A549 (cell line): ENCODE measurements at regions of chr2 and their contacts with region 1.

Region 1: GRCh38 chr2:44981136-44982108 is 27.8 kb downstream of the SIX2 start:
- DNase-seq: peak; percentile 81 to 83
- ATAC-seq: peak; percentile 84 to 97
- H3K4me3 ChIP-seq: no peak overlapping the region
- H3K27ac ChIP-seq: no peak overlapping the region
- H3K4me1 ChIP-seq: no peaks in the 10 kb centered on the region
- CTCF ChIP-seq: peak; percentile 97
- EP300 ChIP-seq: no peak
- POLR2A ChIP-seq: no peak
- RAD21 ChIP-seq: peak; percentile 97 to 99

Region 2: DNA sequence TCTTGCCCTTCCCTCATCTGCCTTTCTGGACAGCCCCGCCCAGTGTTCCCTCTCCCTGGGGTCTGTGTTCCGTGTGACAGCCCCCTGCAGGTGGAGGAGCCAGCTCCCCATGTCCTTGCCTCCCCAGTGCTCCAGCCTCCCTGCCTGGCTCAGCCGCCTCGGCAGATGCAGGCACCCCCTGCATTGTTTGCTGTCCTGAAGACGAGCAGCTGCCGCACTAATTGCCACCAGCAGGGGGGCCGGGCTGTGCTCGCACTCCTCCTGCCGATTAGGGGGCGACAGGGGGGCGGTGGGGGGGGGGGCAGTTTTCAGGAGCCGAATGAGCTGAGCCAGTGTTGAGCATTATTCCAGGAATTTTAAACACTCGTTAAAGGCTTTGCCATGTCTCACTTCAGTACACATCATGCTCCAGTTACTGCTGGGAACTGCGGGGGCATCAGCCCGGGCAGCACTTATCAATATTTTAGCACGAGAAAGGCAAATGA is 16.6 kb before region 1 on chr2:
- CTCF ChIA-PET with region 1: interaction called, 110 read pairs
- POLR2A ChIA-PET with region 1: no interaction called
- DNase-seq: no peak
- ATAC-seq: peak; percentile 26 to 63; a peak in 3 of 6 replicates
- H3K4me3 ChIP-seq: no peak overlapping the region
- H3K27ac ChIP-seq: no peak overlapping the region; a peak in 1 of 6 replicates
- H3K4me1 ChIP-seq: peaks cover 1% of the 10 kb centered on the region; the same call in 2 of the 3 replicates
- CTCF ChIP-seq: no peak
- EP300 ChIP-seq: no peak
- POLR2A ChIP-seq: no peak
- RAD21 ChIP-seq: no peak

Region 3: DNA sequence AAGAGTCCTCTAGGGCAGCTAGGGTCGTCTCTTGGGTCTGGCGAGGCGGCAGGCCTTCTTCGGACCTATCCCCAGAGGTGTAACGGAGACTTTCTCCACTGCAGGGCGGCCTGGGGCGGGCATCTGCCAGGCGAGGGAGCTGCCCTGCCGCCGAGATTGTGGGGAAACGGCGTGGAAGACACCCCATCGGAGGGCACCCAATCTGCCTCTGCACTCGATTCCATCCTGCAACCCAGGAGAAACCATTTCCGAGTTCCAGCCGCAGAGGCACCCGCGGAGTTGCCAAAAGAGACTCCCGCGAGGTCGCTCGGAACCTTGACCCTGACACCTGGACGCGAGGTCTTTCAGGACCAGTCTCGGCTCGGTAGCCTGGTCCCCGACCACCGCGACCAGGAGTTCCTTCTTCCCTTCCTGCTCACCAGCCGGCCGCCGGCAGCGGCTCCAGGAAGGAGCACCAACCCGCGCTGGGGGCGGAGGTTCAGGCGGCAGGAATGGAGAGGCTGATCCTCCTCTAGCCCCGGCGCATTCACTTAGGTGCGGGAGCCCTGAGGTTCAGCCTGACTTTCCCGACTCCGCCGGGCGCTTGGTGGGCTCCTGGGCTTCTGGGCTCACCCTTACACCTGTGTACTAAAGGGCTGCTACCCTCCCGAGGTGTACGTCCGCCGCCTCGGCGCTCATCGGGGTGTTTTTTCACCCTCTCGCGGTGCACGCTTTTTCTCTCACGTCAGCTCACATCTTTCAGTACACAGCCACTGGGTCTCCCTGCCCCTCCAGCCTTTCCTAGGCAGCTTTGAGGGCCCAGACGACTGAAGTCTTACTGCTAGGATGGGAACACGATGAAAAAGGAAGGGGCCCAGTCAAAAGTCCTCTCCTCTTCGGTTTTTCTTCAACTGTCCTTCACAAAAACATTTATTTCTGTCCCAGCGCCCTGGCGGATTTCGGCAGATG is 19.8 kb after region 1 on chr2:
- CTCF ChIA-PET with region 1: interaction called, 170 read pairs
- POLR2A ChIA-PET with region 1: no interaction called
- DNase-seq: no peak
- ATAC-seq: no peak
- H3K4me3 ChIP-seq: no peak overlapping the region
- H3K27ac ChIP-seq: no peak overlapping the region
- H3K4me1 ChIP-seq: no peaks in the 10 kb centered on the region
- CTCF ChIP-seq: no peak
- EP300 ChIP-seq: no peak
- POLR2A ChIP-seq: no peak
- RAD21 ChIP-seq: no peak

Region 4: GRCh38 chr2:45009303-45009927 is 28.0 kb after region 1 on chr2 and contains the start of gene SIX2:
- CTCF ChIA-PET with region 1: interaction called, 170 read pairs
- POLR2A ChIA-PET with region 1: no interaction called
- DNase-seq: peak; percentile 78 to 81
- ATAC-seq: peak; percentile 55 to 80
- H3K4me3 ChIP-seq: peak within 1 kb of the TSS; percentile 65
- H3K27ac ChIP-seq: peak within 1 kb of the TSS; percentile 59 to 76
- H3K4me1 ChIP-seq: peaks cover 9% of the 10 kb centered on the region; the same call in 2 of the 3 replicates
- CTCF ChIP-seq: no peak
- EP300 ChIP-seq: no peak
- POLR2A ChIP-seq: no peak
- RAD21 ChIP-seq: no peak
- polyA plus RNA-seq, gene SIX2: 0.10 and 0.13 TPM in 2 replicates

Region 5: GRCh38 chr2:45024600-45025291 is 43.3 kb after region 1 on chr2:
- CTCF ChIA-PET with region 1: interaction called, 34 read pairs
- POLR2A ChIA-PET with region 1: no interaction called
- DNase-seq: peak; percentile 72 to 89
- ATAC-seq: peak; percentile 73 to 85
- H3K4me3 ChIP-seq: no peak overlapping the region
- H3K27ac ChIP-seq: peak overlapping the region; percentile 50 to 82
- H3K4me1 ChIP-seq: peaks cover 18% of the 10 kb centered on the region
- CTCF ChIP-seq: peak; percentile 70
- EP300 ChIP-seq: no peak
- POLR2A ChIP-seq: no peak
- RAD21 ChIP-seq: peak; percentile 63 to 77

Region 6: DNA sequence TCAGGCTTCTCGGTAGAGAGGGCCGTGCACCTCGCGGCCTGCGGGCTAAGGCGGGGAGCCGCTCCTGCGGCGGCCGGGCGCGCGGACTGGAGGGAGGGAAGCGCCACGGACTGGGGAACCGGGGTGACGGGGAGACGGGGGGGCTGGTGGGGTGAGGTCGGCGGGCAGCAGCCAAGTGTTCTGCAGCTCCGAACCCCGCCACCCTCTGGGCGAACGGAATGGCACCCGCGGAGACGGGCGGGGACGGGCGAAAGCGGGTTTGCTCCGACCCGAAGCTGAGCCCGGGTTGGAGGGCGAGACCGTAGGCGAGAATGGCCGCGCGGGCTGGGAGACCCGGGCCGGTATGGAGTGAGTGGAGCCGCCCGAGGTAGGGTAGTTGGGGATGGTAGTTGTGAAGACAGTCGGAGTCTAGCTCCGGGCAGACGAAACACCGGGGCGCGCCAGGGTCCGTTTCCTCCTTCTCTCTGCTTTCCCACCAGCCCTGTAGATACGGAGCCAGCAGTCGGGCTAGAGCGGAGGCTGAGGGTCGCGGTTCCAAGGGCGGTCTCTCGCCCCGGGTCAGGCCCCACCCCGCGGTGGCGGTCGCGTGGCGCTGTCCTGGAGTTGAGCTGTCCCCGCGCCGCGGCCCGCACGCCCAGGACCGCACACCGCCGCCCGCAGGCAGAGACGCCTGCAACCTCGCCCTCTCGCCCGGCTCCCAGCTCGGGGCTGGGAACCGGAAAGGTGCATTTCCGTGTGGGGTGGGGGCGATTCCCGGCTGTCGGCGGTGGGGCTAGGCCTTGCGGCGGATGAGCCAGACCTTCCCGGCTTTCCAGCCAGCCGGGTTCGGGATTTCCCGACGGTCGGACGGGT is 188.1 kb after region 1 on chr2:
- CTCF ChIA-PET with region 1: interaction called, 10 read pairs
- POLR2A ChIA-PET with region 1: no interaction called
- DNase-seq: peak; percentile 51 to 60
- ATAC-seq: peak; percentile 77 to 79
- H3K4me3 ChIP-seq: peak overlapping the region; percentile 78
- H3K27ac ChIP-seq: peak overlapping the region; percentile 86 to 93
- H3K4me1 ChIP-seq: peaks cover 29% of the 10 kb centered on the region
- CTCF ChIP-seq: peak; percentile 18; the same call in 2 of the 3 replicates
- EP300 ChIP-seq: no peak
- POLR2A ChIP-seq: peak; percentile 29
- RAD21 ChIP-seq: peak in 1 of 2 experiments; percentile 27; a peak in 1 of 5 replicates

Region 7: GRCh38 chr2:45510701-45511420 is 529.4 kb after region 1 on chr2:
- CTCF ChIA-PET with region 1: interaction called, 305 read pairs
- POLR2A ChIA-PET with region 1: no interaction called
- DNase-seq: no peak
- ATAC-seq: no peak
- H3K4me3 ChIP-seq: no peak overlapping the region
- H3K27ac ChIP-seq: no peak overlapping the region
- H3K4me1 ChIP-seq: no peaks in the 10 kb centered on the region
- CTCF ChIP-seq: no peak
- EP300 ChIP-seq: no peak
- POLR2A ChIP-seq: no peak
- RAD21 ChIP-seq: no peak